ENCODE measurements at regions of chr6 and their contacts with region 1.

Region 1: DNA sequence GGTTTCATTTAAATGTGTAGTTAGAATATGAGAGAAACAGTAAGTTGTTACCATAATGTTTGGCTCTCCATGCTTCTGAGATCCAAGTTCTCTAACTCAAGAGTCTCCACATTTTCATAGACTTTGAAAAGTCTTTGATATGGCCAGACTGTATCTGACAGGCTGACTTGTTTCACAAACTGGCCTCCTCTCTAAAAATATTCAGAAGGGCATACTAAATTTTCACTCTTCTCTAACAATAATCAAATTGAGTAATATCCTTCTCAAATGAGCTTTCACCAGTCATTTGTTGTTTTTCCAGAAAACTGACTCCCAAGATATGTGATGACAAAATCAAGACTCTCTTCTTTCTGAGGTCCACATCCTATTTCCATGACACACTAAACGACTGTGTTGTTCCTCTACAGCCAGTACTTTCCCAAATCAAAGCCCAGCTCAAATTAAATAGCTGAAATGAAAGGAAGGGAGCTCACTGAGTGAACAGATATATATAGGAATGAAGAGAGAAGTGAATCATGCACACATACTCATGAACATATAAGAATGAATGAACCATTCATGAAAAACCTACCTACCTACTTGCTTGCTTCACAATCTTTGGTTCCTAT is 15.1 kb downstream of the HIVEP2 start:
- DNase-seq: no peak
- ATAC-seq: no peak
- H3K4me3 ChIP-seq: no peak overlapping the region
- H3K27ac ChIP-seq: no peak overlapping the region; the same call in 1 of the 2 replicates
- H3K4me1 ChIP-seq: peaks cover 31% of the 10 kb centered on the region
- H3K27me3 ChIP-seq: no peaks in the 10 kb centered on the region
- CTCF ChIP-seq: no peak

Region 2: DNA sequence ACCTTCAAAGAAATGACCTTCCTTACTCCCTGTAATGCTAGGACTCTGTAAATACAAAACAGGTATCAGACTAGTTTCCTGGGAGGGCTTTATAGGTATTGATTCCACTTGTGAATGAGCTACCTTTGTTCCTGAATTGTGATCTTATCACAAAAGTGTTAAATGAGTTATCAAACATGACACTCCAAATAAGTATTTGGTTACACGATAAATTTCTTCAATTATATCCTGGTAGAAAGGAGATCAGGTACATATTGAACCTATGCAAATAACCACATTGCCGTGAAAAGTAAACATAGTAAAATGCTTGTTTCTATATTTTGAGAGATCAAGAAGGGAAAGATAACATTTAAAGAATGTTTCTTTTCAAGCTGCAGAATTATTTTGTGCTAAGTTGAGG is 270.2 kb before region 1 on chr6:
- CTCF ChIA-PET with region 1: no interaction called
- POLR2A ChIA-PET with region 1: no interaction called
- in situ Hi-C with region 1: no loop called
- intact Hi-C with region 1: no loop called
- DNase-seq: no peak
- ATAC-seq: no peak
- H3K4me3 ChIP-seq: no peak overlapping the region
- H3K27ac ChIP-seq: no peak overlapping the region
- H3K4me1 ChIP-seq: no peaks in the 10 kb centered on the region
- H3K27me3 ChIP-seq: peaks cover 13% of the 10 kb centered on the region
- CTCF ChIP-seq: no peak

Region 3: GRCh38 chr6:142819603-142820337 is 110.1 kb before region 1 on chr6:
- CTCF ChIA-PET with region 1: no interaction called
- POLR2A ChIA-PET with region 1: no interaction called
- in situ Hi-C with region 1: no loop called
- intact Hi-C with region 1: no loop called
- DNase-seq: no peak
- ATAC-seq: peak; percentile 85
- H3K4me3 ChIP-seq: peak overlapping the region; percentile 39 to 65
- H3K27ac ChIP-seq: peak overlapping the region; percentile 85
- H3K4me1 ChIP-seq: peaks cover 15% of the 10 kb centered on the region
- H3K27me3 ChIP-seq: no peaks in the 10 kb centered on the region
- CTCF ChIP-seq: no peak

Region 4: DNA sequence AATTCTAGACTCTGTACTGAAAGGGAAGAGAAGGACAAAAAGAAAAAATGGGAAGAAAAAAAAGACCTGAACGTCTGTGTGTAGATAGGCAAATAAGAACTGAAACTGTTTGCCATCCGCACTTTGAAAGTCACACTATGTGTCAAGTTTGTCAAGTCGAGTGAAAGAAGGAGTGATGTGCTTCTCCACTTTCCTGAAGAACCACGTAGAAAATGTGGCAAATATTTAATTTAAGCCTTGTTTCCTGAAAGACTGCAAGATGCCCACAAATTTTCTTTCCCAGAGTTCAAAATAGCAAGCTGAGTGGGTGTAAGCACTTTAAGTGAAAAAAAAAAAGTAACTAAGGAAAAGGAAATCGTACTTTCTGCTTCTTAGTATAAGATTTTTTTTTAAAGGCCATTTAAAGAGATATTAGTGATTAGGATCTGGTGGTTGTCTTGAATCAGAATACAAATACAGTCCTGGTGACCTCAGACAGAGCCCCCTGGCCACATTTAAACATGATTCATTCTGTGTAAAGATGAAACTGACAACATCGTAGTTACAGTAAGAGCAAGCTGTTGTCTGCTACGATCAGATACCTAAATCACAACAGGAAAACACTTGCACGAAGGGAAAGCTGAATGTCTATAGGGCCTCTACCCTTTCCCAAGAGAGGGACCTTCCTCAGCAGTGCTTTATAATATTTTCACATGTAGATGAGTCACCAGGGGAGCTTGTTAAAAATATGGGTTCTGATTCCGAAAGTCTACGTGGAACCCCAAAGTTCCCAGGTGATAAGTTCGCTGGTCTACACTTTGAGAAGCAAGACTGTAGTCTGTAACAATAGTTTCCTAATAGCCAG is 87.2 kb before region 1 on chr6:
- CTCF ChIA-PET with region 1: no interaction called
- POLR2A ChIA-PET with region 1: no interaction called
- in situ Hi-C with region 1: no loop called
- intact Hi-C with region 1: no loop called
- DNase-seq: peak; percentile 77
- ATAC-seq: peak; percentile 63
- H3K4me3 ChIP-seq: peak overlapping the region; percentile 30 to 50
- H3K27ac ChIP-seq: peak overlapping the region; percentile 91
- H3K4me1 ChIP-seq: peaks cover 59% of the 10 kb centered on the region
- H3K27me3 ChIP-seq: no peaks in the 10 kb centered on the region
- CTCF ChIP-seq: no peak

Region 5: GRCh38 chr6:142893075-142893474 is 36.8 kb before region 1 on chr6:
- CTCF ChIA-PET with region 1: no interaction called
- POLR2A ChIA-PET with region 1: interaction called, 12 read pairs
- in situ Hi-C with region 1: no loop called
- intact Hi-C with region 1: no loop called
- DNase-seq: no peak
- ATAC-seq: 0 out of 2 replicates have a peak, but pooled peaks have one; percentile 45
- H3K4me3 ChIP-seq: no peak overlapping the region
- H3K27ac ChIP-seq: no peak overlapping the region
- H3K4me1 ChIP-seq: peaks cover 11% of the 10 kb centered on the region; the same call in 1 of the 2 replicates
- H3K27me3 ChIP-seq: no peaks in the 10 kb centered on the region
- CTCF ChIP-seq: no peak

Region 6: GRCh38 chr6:144063744-144064401 is 1134.0 kb after region 1 on chr6:
- CTCF ChIA-PET with region 1: no interaction called
- POLR2A ChIA-PET with region 1: no interaction called
- in situ Hi-C with region 1: no loop called
- intact Hi-C with region 1: no loop called
- DNase-seq: no peak
- ATAC-seq: peak; percentile 95
- H3K4me3 ChIP-seq: peak overlapping the region; percentile 56 to 72
- H3K27ac ChIP-seq: no peak overlapping the region
- H3K4me1 ChIP-seq: peaks cover 6% of the 10 kb centered on the region
- H3K27me3 ChIP-seq: peaks cover 37% of the 10 kb centered on the region
- CTCF ChIP-seq: peak; percentile 54

Measured in Panc1 (cell line).